ENCODE measurements at regions of chr1 and their contacts with region 1.

Region 1: GRCh38 chr1:15847100-15847892 is at the start of gene SPEN:
- DNase-seq: peak; percentile 89
- H3K4me3 ChIP-seq: peak within 1 kb of the TSS; percentile 87
- H3K27ac ChIP-seq: peak within 1 kb of the TSS; percentile 75
- H3K27me3 ChIP-seq: no peaks in the 10 kb centered on the region
- CTCF ChIP-seq: no peak
- polyA plus RNA-seq, gene SPEN: 5.2 and 5.4 TPM in 2 replicates

Region 2: DNA sequence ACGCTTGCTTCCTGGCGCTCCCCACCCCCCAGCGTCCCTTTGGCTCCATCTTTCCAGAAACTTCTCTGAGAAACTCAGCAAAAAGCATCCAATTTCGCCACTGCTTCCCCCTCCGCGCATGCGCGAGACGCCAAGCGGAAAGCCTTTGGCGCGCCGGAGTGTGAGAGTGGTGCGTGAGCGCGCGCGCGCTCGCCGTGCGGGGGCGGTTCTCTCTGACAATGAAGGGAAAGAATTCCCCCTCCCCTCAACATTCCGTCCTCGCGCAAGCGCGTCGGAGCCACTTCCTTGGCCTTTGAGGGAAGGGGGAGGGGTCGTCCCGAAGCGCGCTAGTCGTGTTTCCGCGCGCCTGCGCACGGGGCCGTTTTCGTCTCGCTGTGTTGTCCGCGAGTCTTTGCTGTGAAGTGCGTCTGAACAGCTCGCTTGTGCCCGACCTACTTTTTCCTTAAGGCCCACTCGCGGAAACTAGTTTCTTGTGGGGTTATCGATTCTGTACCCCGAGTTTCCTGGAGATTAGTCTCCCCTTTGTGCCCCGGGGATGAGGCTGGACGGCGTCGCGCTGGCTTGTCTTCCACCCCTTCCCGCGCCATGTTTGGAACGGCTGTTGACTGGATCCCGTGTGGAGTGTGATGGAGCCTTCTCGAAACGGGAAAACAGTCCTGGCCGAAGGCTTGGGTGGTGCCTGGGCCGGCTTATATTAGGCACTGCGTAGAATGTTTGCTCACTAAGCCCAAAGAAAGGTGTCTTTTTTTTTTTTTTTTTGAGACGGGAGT is 11.4 kb before region 1 on chr1:
- CTCF ChIA-PET with region 1: interaction called, 3 read pairs
- POLR2A ChIA-PET with region 1: interaction called, 59 read pairs
- DNase-seq: peak; percentile 98
- H3K4me3 ChIP-seq: peak overlapping the region; percentile 88
- H3K27ac ChIP-seq: peak overlapping the region; percentile 99
- H3K27me3 ChIP-seq: no peaks in the 10 kb centered on the region
- CTCF ChIP-seq: no peak

Region 3: DNA sequence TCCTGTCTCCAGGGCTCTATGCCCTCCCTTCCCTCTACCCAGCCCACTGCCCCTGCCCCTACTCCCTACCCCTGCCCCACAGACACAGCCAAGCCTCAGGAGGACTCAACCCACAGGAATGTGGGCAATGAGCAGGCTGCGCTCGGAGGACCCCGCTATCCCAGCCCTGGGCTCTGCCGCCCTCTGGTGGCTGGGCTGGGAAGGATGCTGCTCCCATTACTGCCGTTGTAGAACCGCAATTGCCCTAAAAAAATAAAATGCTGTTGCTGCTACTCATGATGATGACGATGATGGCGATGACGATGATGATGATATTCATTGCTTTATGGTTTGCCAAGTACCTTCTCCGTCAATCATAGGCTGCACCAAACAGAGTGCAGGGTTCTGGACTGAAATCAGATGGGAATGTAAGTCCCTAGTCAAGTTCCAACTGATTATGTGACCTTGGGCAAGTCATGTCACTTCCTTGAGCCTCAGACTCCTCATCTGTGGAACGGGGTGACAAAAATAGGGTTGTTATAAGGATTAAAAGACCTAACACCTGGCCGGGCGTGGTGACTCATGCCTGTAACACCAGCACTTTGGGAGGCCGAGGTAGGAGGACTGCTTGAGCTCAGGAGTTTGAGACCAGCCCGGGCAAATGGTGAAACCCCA is 340.6 kb after region 1 on chr1:
- CTCF ChIA-PET with region 1: no interaction called
- POLR2A ChIA-PET with region 1: no interaction called
- DNase-seq: peak; percentile 58
- H3K4me3 ChIP-seq: no peak overlapping the region
- H3K27ac ChIP-seq: no peak overlapping the region
- H3K27me3 ChIP-seq: no peaks in the 10 kb centered on the region
- CTCF ChIP-seq: peak; percentile 98